ENCODE measurements at regions of chr12 and their contacts with region 1.

Region 1: DNA sequence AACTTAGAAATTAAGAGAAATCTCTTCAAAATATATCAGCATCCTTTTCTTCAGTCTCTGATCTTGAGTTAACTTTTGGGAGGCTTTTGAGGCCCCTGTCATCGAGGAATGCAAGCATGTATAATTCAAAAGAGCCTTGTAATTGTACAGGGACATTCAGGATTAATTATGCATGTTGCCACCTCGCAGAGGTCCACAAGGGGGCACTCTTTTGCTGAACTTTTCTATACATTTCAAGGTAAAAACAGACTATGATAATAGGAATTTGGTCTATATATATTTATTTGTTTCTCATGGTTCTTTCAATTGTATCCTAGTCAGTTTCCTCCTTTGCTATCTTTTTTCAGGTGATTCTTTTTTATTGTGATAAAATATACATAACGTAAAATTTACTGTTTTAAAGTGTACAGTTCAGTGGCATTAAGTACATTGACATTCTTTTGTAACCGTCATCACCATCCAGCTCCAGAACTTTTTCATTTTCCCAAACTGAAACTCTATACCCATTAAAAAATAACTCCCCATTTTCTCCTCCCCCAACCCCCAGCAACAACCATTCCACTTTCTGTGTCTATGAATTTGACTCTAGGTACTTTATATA is 47.0 kb upstream of the SLC2A13 start:
- DNase-seq: no peak
- H3K4me3 ChIP-seq: no peak overlapping the region
- H3K27ac ChIP-seq: no peak overlapping the region
- H3K4me1 ChIP-seq: no peaks in the 10 kb centered on the region
- H3K27me3 ChIP-seq: no peaks in the 10 kb centered on the region
- CTCF ChIP-seq: peak; percentile 27 to 81 (median 68)
- POLR2A ChIP-seq: no peak

Region 2: DNA sequence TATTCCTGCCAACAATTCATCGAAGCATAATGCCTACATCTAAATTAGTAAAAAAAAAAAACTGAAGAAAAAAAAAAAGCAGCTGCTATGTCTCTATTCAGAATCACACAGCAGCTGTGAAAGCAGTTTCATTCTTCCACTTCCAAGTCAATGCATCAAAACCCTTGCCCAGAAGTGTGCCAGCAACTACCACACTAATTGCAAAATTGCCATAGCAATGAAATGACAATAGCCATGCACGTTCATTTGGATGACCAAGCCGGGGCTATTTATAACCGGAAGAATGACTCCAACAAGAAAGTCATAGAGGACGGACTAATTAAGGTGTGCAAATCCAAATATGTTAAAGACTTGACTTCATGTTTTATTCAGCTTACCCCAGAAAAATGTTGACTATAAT is 89.5 kb before region 1 on chr12:
- intact Hi-C with region 1: no loop called
- DNase-seq: no peak
- H3K4me3 ChIP-seq: no peak overlapping the region
- H3K27ac ChIP-seq: no peak overlapping the region
- H3K4me1 ChIP-seq: peaks cover 6% of the 10 kb centered on the region
- H3K27me3 ChIP-seq: no peaks in the 10 kb centered on the region
- CTCF ChIP-seq: no peak
- POLR2A ChIP-seq: no peak

Region 3: DNA sequence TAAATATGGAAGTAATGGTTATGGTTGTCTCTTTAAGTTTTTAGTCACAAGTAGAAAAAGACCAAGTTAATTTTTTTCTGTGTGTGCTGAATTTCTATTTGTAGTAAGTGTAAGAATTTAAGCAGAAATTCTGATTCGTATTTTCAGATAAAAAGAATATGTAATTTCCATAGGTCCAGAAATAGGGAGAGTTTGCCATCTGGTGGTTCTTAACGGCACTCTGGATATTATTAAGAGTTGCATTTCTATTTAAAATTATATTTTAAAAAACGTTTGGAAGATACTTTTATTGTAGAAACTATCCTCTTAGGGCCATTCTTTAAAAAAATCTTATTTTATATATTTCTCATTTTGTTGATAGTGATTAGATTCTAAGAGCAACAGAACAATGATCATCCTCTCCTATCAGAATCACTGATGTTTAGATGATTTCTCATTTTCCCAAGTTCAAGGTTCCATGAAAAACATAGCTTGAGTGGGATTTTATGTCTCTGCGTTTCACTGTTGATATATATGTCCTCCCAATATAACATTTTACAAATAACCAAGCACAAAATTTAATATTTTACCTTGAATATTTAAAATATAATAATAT is 160.2 kb after region 1 on chr12:
- intact Hi-C with region 1: loop called (anchors 10 kb)
- DNase-seq: no peak
- H3K4me3 ChIP-seq: no peak overlapping the region
- H3K27ac ChIP-seq: no peak overlapping the region
- H3K4me1 ChIP-seq: no peaks in the 10 kb centered on the region
- H3K27me3 ChIP-seq: no peaks in the 10 kb centered on the region
- CTCF ChIP-seq: peak in 1 of 3 experiments; percentile 33
- POLR2A ChIP-seq: no peak

Region 4: DNA sequence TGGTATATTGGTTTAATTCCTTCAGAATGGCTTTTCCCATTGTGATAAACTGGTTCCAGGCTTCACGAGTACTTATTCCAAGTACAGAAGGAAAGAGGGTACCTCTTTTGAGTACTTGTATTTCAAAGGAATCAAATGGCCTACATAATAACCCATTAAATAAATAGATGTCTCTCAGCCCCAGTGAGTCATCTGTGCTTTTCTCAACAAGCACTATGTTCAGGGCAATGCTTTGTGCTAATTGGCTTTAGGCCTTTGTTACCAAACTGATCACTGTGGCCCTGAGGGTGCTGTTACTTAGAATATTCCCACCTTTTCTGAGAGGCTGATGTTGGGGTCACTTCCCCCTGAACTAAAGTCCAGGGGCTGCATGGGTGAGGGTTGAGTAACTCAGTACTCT is 179.0 kb after region 1 on chr12:
- intact Hi-C with region 1: no loop called
- DNase-seq: no peak
- H3K4me3 ChIP-seq: no peak overlapping the region
- H3K27ac ChIP-seq: no peak overlapping the region
- H3K4me1 ChIP-seq: no peaks in the 10 kb centered on the region
- H3K27me3 ChIP-seq: no peaks in the 10 kb centered on the region
- CTCF ChIP-seq: no peak
- POLR2A ChIP-seq: no peak

Measured in vagina (tissue), 2 donors.